Pancreas (tissue), 10 donors: ENCODE measurements at regions of chr19 and their contacts with region 1.

Region 1: GRCh38 chr19:47436712-47437401 is 17.5 kb upstream of the MEIS3 start:
- DNase-seq: peak; percentile 66 to 93 (median 86)
- ATAC-seq: peak; percentile 87 to 100 (median 98)
- H3K4me3 ChIP-seq: no peak overlapping the region
- H3K27ac ChIP-seq: no peak overlapping the region
- H3K4me1 ChIP-seq: no peaks in the 10 kb centered on the region
- H3K27me3 ChIP-seq: peaks cover 0 to 4% (median 0%) of the 10 kb centered on the region in 4 donors
- CTCF ChIP-seq: peak; percentile 78 to 93 (median 86)

Region 2: GRCh38 chr19:47514869-47515588 is 78.2 kb after region 1 on chr19 and contains the start of gene NAPA:
- intact Hi-C with region 1: loop called in 2 of 3 experiments (anchors 5 to 10 kb)
- DNase-seq: peak; percentile 99 to 100 (median 100)
- ATAC-seq: peak; percentile 89 to 94 (median 90)
- H3K4me3 ChIP-seq: peak within 1 kb of the TSS; percentile 80 to 95 (median 92)
- H3K27ac ChIP-seq: peak within 1 kb of the TSS; percentile 92 to 97 (median 94)
- H3K4me1 ChIP-seq: peaks cover 19 to 30% (median 29%) of the 10 kb centered on the region in 3 donors
- H3K27me3 ChIP-seq: no peaks in the 10 kb centered on the region
- CTCF ChIP-seq: no peak
- total RNA-seq, gene NAPA: 47.2 to 63.5 (median 53.2) TPM